AG04449 (cell line): ENCODE measurements at regions of chr10 and their contacts with region 1.

Region 1: GRCh38 chr10:60896033-60896432 is 48.0 kb downstream of the RHOBTB1 start:
- DNase-seq: peak; percentile 51
- H3K4me3 ChIP-seq: no peak overlapping the region
- CTCF ChIP-seq: no peak

Region 2: DNA sequence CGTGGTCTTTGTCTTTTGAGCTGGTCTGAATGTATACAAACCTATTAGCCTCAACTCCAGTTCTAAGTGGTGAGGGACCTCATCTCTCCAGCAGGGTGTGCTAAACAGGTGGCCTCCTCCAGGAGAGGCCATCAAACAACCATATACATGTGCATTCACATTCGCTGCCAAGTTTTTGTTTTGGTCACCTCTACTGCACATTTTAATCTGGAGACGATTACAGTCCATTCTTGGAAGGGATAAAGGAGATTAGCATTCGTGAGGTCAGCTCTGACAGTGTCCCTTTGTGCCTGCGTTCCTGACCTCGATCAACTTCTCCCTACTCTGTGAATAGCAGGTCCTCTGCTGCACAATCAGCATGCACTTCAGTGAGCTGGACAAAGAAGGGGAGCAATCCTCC is 12.8 kb before region 1 on chr10:
- CTCF ChIA-PET with region 1: interaction called, 10 read pairs
- POLR2A ChIA-PET with region 1: no interaction called
- DNase-seq: no peak
- H3K4me3 ChIP-seq: no peak overlapping the region
- CTCF ChIP-seq: peak; percentile 38